Adrenal gland (tissue), 19 donors: ENCODE measurements at regions of chr18 and their contacts with region 1.

Region 1: DNA sequence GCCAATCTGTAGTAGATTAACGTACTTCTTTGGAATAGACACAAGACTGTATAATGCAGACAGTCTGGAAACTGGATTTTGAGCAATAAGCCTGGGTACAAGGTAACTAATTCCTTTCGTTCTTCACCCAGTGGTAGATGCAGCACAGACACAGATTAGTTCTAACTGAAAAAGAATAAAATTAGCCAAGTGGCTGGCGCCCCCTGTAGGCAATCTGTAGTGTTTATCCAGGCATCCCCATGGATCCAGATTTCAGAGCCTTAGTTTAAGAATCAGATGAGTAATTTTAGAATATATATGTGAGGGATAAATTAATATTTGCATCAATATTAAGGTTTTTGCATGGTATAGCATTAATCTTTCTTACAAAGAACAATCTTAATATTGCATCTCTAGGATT is 563.9 kb downstream of the DCC start:
- DNase-seq: peak; percentile 11 to 74 (median 26)
- H3K4me3 ChIP-seq: no peak overlapping the region
- H3K27ac ChIP-seq: no peak overlapping the region
- H3K4me1 ChIP-seq: no peaks in the 10 kb centered on the region
- H3K27me3 ChIP-seq: no peaks in the 10 kb centered on the region
- CTCF ChIP-seq: peak in 5 of 6 experiments; percentile 17 to 51 (median 42)
- POLR2A ChIP-seq: no peak

Region 2: DNA sequence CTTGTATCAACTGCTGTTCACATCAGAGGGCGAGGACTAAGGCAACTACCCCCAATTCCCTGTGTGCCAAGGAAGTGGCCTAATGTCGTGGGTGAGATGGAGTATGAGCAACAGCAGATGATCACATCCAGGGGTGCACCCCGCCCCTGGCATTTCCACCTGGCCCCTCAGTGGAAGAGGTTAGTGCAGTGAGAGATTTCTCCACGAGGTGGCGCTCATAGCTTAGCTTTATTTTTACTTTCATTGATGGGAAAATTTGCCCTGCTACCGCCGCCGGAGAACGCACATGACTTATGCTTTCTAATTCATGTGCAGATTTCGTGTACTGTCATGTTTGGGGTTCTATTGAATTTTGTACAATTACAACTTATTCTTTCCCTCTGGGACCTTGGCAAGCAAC is 1235.8 kb before region 1 on chr18:
- intact Hi-C with region 1: loop called in 1 of 2 experiments (anchors 10 kb)
- DNase-seq: peak; percentile 52 to 85 (median 68)
- H3K4me3 ChIP-seq: no peak overlapping the region
- H3K27ac ChIP-seq: no peak overlapping the region
- H3K4me1 ChIP-seq: no peaks in the 10 kb centered on the region
- H3K27me3 ChIP-seq: no peaks in the 10 kb centered on the region
- CTCF ChIP-seq: peak; percentile 61 to 71 (median 70)
- POLR2A ChIP-seq: no peak

Region 3: DNA sequence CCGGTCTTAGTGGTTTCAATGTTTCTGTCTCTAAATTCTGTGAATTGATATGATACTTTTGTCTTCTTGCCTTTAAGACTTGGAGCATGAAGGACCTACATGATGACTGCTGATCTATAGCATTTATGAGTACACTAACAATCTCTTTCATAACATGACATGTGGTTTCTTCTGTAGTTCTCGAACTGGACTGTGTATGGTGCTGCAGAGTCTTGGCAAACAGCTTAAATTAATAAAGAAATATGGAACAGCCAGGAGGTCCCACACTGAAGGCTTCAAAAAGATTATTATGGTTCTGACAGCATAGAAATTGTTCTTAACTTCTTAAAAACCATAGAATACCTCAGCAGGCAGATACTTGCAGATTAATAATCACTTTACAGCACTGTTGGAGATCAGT is 418.9 kb before region 1 on chr18:
- intact Hi-C with region 1: no loop called
- DNase-seq: no peak
- H3K4me3 ChIP-seq: no peak overlapping the region
- H3K27ac ChIP-seq: no peak overlapping the region
- H3K4me1 ChIP-seq: no peaks in the 10 kb centered on the region
- H3K27me3 ChIP-seq: no peaks in the 10 kb centered on the region
- CTCF ChIP-seq: no peak
- POLR2A ChIP-seq: no peak